B cell (primary cell): ENCODE measurements at regions of chr12 and their contacts with region 1.

Region 1: GRCh38 chr12:62287870-62288269 is 27.7 kb downstream of the USP15 start:
- DNase-seq: no peak
- ATAC-seq: no peak
- H3K4me3 ChIP-seq: no peak overlapping the region
- H3K4me3 Mint-ChIP-seq: no peak overlapping the region
- H3K27ac ChIP-seq: no peak overlapping the region
- H3K27ac Mint-ChIP-seq: no peak overlapping the region
- H3K4me1 ChIP-seq: peaks cover 13 to 17% of the 10 kb centered on the region in 2 donors
- H3K4me1 Mint-ChIP-seq: peaks cover 71% of the 10 kb centered on the region
- H3K27me3 ChIP-seq: no peaks in the 10 kb centered on the region
- H3K27me3 Mint-ChIP-seq: no peaks in the 10 kb centered on the region
- CTCF ChIP-seq: no peak

Region 2: DNA sequence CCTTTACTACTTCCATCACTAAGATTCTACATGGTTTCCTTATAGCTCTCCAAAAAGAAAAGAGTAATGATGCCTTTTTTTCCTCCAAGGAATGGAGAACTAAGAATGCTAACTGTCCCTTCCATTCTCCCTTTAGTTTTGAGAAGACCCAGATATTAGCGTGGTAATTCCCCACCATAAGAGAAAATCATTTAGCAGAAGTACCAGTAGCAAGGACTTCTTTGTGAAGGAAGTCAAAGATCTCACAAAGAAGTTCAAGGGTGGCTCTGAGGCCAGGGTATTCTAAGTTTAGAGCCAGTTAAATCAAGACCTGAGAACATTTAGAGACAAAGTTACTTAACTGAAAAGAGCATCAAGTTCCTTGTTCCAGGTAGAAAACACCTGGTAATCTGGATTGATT is 20.4 kb before region 1 on chr12:
- CTCF ChIA-PET with region 1: no interaction called
- POLR2A ChIA-PET with region 1: no interaction called
- intact Hi-C with region 1: loop called (anchors 2 kb)
- DNase-seq: peak; percentile 30
- ATAC-seq: peak; percentile 42
- H3K4me3 ChIP-seq: no peak overlapping the region
- H3K4me3 Mint-ChIP-seq: peak overlapping the region; percentile 6
- H3K27ac ChIP-seq: peak overlapping the region in 1 of 2 donors; percentile 63
- H3K27ac Mint-ChIP-seq: peak overlapping the region; percentile 17
- H3K4me1 ChIP-seq: peaks cover 33 to 83% of the 10 kb centered on the region in 2 donors
- H3K4me1 Mint-ChIP-seq: peaks cover 80% of the 10 kb centered on the region
- H3K27me3 ChIP-seq: no peaks in the 10 kb centered on the region
- H3K27me3 Mint-ChIP-seq: no peaks in the 10 kb centered on the region
- CTCF ChIP-seq: no peak